ENCODE measurements at regions of chr2 and their contacts with region 1.

Region 1: GRCh38 chr2:39227628-39228412 is 15.9 kb downstream of the CDKL4 start:
- DNase-seq: peak; percentile 87
- ATAC-seq: peak; percentile 89

Region 2: GRCh38 chr2:39062320-39062719 is 165.5 kb before region 1 on chr2:
- intact Hi-C with region 1: loop called (anchors 5 kb)
- DNase-seq: no peak
- ATAC-seq: no peak

Region 3: DNA sequence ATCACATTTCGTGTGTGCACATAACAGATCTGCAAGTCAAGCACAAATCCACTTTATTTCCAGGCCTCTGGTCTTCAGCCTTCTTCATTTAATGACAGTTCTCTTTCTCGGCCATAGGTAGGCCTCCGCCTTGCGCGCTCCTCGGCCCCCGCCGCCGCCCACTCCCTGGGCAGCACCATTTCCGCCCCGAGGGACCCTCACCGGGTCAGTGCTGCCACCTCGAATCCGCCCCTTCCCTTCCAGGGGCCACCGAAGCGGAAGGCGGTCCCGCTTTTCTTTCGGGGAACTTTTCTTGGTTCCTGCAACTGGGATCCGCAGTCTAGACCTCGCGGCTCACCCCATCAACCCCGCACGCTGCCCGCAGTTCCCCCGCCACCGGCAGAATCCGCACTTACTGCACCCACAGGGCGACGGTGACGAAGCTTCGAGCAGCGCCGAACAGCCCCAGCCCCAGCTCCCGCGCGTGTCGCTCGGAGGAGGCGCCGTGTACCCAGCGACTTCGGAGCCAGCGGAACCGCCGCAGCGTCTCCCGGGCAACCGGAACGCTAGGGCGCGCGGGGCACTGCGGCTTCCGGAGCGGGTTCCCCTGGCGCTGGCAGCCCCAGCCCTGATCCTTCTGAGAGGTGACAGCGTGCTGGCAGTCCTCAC is 15.8 kb after region 1 on chr2 and contains the start of gene CDKL4:
- intact Hi-C with region 1: no loop called
- DNase-seq: no peak
- ATAC-seq: peak; percentile 64
- total RNA-seq, gene CDKL4: 0.53 TPM